ENCODE measurements at regions of chr11 and their contacts with region 1.

Region 1: DNA sequence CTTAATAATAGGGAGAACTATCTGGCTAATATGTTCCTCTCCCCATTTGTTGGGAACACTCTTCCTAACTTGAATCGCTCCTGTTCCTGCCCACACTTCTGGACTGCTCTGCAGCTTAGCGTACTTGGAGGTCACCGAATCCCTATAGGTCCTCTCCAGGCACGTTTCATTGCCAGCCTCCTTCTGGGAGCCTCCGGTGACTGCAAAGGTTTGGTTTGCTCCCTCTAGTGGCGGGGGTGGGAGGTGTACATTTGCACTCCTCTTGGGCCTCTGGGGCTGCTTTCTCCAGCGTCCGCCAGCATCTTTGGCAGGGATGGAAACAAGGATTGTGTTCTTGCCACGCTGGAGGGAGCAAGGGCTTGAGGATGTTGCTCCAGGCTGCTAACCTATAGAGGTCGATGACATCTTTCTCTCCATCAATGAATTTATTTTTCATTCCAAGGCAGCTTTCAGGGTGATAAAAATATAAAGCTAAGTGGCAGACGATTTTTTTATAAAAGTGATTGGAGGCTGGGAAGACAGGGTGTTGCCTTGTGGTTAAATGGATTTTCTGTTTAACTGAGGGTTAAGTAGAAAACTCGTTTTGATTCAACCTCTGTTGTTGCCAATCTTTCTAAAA is 48.7 kb downstream of the TSPAN18 start:
- DNase-seq: peak; percentile 66
- H3K4me3 ChIP-seq: no peak overlapping the region
- H3K27ac ChIP-seq: peak overlapping the region in 3 of 4 donors; percentile 69 to 86 (median 85)
- H3K4me1 ChIP-seq: peaks cover 0 to 24% (median 10%) of the 10 kb centered on the region in 4 donors
- H3K27me3 ChIP-seq: peaks cover 17% of the 10 kb centered on the region
- CTCF ChIP-seq: peak; percentile 69 to 79 (median 74)
- EP300 ChIP-seq: no peak
- POLR2A ChIP-seq: no peak

Region 2: DNA sequence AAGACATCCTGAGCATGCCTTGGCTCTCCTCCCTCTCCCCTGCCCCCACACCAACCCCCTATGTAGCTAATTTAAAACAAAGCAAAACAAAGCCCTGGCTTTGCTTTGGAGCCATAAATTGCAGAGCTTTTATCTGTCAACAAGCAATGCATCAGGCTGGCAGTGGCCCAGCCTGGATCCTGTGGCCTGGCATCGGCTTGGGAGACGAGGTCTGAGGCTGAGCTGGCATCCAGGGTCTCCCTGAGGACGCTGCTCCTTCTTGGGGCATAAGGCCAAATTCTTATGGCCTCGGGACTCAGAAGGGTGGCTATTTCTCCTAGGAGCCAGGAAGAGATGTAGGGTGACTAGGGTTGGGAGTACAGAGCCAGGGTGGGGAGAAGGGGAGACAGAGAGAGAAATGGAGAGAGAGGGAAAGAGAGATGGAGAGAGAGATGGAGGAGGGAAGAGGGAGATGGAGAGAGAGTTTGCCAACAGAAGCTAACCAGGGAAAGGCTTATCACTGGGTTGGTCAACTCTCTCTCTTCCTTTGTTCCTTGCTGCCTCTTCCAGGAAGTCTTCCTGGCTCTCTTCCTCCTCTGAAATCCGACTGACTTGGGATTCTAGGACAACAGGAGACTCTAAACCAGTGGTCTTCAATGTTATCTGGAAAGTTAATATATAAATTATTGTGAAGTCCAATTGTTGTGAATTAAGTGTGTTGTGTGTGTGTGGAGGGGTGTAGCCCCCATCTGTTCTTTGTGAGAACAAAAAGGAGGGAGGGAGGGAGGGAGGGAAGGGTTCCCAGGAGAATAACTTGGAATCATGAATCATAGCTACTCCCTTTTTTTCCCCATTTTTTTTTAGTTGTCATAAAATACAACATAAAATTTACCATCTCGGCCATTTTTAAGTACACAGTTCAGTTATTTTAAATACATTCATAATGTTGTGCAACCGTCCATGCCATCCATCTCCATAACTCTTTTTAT is 19.6 kb before region 1 on chr11:
- in situ Hi-C with region 1: no loop called
- intact Hi-C with region 1: loop called (anchors 2 kb)
- DNase-seq: peak; percentile 39
- H3K4me3 ChIP-seq: no peak overlapping the region
- H3K27ac ChIP-seq: peak overlapping the region; percentile 64 to 87 (median 76)
- H3K4me1 ChIP-seq: peaks cover 6 to 42% (median 18%) of the 10 kb centered on the region in 4 donors
- H3K27me3 ChIP-seq: no peaks in the 10 kb centered on the region
- CTCF ChIP-seq: no peak
- EP300 ChIP-seq: no peak
- POLR2A ChIP-seq: no peak

Region 3: GRCh38 chr11:44852159-44852747 is 76.8 kb after region 1 on chr11:
- in situ Hi-C with region 1: no loop called
- intact Hi-C with region 1: no loop called
- DNase-seq: no peak
- H3K4me3 ChIP-seq: no peak overlapping the region
- H3K27ac ChIP-seq: no peak overlapping the region
- H3K4me1 ChIP-seq: peaks cover 0 to 5% (median 0%) of the 10 kb centered on the region in 4 donors
- H3K27me3 ChIP-seq: no peaks in the 10 kb centered on the region
- CTCF ChIP-seq: no peak
- EP300 ChIP-seq: no peak
- POLR2A ChIP-seq: no peak

Region 4: GRCh38 chr11:45473341-45473895 is 697.9 kb after region 1 on chr11:
- in situ Hi-C with region 1: no loop called
- intact Hi-C with region 1: no loop called
- DNase-seq: no peak
- H3K4me3 ChIP-seq: no peak overlapping the region
- H3K27ac ChIP-seq: no peak overlapping the region
- H3K4me1 ChIP-seq: no peaks in the 10 kb centered on the region
- H3K27me3 ChIP-seq: no peaks in the 10 kb centered on the region
- CTCF ChIP-seq: no peak
- EP300 ChIP-seq: no peak
- POLR2A ChIP-seq: no peak

Measured in transverse colon (tissue), 4 donors.